ENCODE measurements at regions of chr2 and their contacts with region 1.

Region 1: GRCh38 chr2:223051693-223052289 is at the start of gene KCNE4:
- DNase-seq: peak; percentile 82
- ATAC-seq: peak; percentile 25
- H3K4me3 ChIP-seq: peak within 1 kb of the TSS; percentile 41
- H3K27ac ChIP-seq: peak within 1 kb of the TSS; percentile 68
- H3K4me1 ChIP-seq: peaks cover 27% of the 10 kb centered on the region
- H3K27me3 ChIP-seq: no peaks in the 10 kb centered on the region
- CTCF ChIP-seq: no peak
- POLR2A ChIP-seq: peak; percentile 94
- RAD21 ChIP-seq: no peak
- total RNA-seq, gene KCNE4: 6.6 and 8.3 TPM in 2 replicates

Region 2: GRCh38 chr2:222903234-222904220 is 148.3 kb before region 1 on chr2:
- CTCF ChIA-PET with region 1: no interaction called
- POLR2A ChIA-PET with region 1: no interaction called
- dilution Hi-C with region 1: no loop called
- in situ Hi-C with region 1: no loop called
- intact Hi-C with region 1: no loop called
- DNase-seq: peak; percentile 73
- ATAC-seq: peak; percentile 24; the same call in 1 of the 2 replicates
- H3K4me3 ChIP-seq: no peak overlapping the region
- H3K27ac ChIP-seq: peak overlapping the region; percentile 80; the same call in 1 of the 2 replicates
- H3K4me1 ChIP-seq: peaks cover 36% of the 10 kb centered on the region
- H3K27me3 ChIP-seq: no peaks in the 10 kb centered on the region
- CTCF ChIP-seq: peak; percentile 77
- POLR2A ChIP-seq: no peak
- RAD21 ChIP-seq: peak; percentile 79

Region 3: GRCh38 chr2:222993920-222994650 is 57.7 kb before region 1 on chr2:
- CTCF ChIA-PET with region 1: interaction called, 3 read pairs
- POLR2A ChIA-PET with region 1: no interaction called
- dilution Hi-C with region 1: no loop called
- in situ Hi-C with region 1: no loop called
- intact Hi-C with region 1: loop called (anchors 2 kb)
- DNase-seq: peak; percentile 98
- ATAC-seq: peak; percentile 83
- H3K4me3 ChIP-seq: no peak overlapping the region
- H3K27ac ChIP-seq: peak overlapping the region; percentile 88; the same call in 1 of the 2 replicates
- H3K4me1 ChIP-seq: peaks cover 12% of the 10 kb centered on the region
- H3K27me3 ChIP-seq: no peaks in the 10 kb centered on the region
- CTCF ChIP-seq: 0 out of 2 replicates have a peak, but pooled peaks have one; percentile 1
- POLR2A ChIP-seq: no peak
- RAD21 ChIP-seq: 0 out of 2 replicates have a peak, but pooled peaks have one; percentile 9

Region 4: GRCh38 chr2:223027442-223027841 is 24.3 kb before region 1 on chr2:
- CTCF ChIA-PET with region 1: interaction called, 10 read pairs
- POLR2A ChIA-PET with region 1: interaction called, 6 read pairs
- dilution Hi-C with region 1: no loop called
- in situ Hi-C with region 1: no loop called
- intact Hi-C with region 1: no loop called
- DNase-seq: peak; percentile 81
- ATAC-seq: peak; percentile 54
- H3K4me3 ChIP-seq: no peak overlapping the region
- H3K27ac ChIP-seq: no peak overlapping the region
- H3K4me1 ChIP-seq: peaks cover 5% of the 10 kb centered on the region; the same call in 1 of the 2 replicates
- H3K27me3 ChIP-seq: no peaks in the 10 kb centered on the region
- CTCF ChIP-seq: no peak
- POLR2A ChIP-seq: no peak
- RAD21 ChIP-seq: no peak

Region 5: DNA sequence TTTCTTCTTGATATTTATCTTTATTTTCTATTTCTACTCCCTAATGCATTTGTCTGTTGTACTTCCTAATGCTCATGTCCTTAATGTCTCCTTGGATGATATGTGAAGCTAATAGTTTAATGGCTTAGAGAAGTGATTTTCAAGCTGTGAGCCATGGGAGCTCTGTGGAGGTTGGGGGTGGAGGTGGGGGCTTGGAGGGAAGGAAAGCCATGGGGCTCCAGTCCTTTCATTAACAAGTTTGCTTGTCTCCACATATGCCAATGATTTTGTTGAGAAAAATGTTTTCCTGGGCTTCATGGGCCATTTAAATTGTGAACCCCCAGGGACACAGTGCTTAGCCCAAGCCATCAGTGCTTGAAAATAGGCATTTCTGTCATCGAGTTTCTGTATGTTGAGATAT is 286.2 kb after region 1 on chr2:
- CTCF ChIA-PET with region 1: no interaction called
- POLR2A ChIA-PET with region 1: no interaction called
- dilution Hi-C with region 1: no loop called
- in situ Hi-C with region 1: no loop called
- intact Hi-C with region 1: no loop called
- DNase-seq: no peak
- ATAC-seq: no peak
- H3K4me3 ChIP-seq: no peak overlapping the region
- H3K27ac ChIP-seq: no peak overlapping the region
- H3K4me1 ChIP-seq: no peaks in the 10 kb centered on the region
- H3K27me3 ChIP-seq: no peaks in the 10 kb centered on the region; the same call in 1 of the 2 replicates
- CTCF ChIP-seq: no peak
- POLR2A ChIP-seq: no peak
- RAD21 ChIP-seq: no peak

Region 6: DNA sequence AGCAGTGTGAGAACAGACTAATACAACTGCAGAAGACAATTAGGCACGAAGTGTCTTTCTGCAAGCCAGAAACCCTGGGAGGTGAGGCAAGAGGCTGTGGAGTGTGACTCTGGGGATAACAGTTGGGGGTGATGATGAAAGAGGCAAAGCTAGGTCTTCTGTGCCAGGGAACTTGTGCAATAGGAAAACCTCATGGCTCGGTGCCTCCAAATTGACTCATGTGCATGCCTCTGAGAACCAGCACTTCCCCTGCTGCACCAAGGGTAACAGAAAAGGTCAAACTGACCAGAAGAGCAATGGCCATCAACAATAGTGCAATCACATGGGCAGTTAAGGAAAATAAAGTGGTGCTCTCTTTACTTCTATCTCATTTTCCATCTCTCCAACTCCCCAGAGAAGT is 414.0 kb after region 1 on chr2:
- CTCF ChIA-PET with region 1: no interaction called
- POLR2A ChIA-PET with region 1: no interaction called
- dilution Hi-C with region 1: no loop called
- in situ Hi-C with region 1: no loop called
- intact Hi-C with region 1: loop called (anchors 10 kb)
- DNase-seq: peak; percentile 96
- ATAC-seq: peak; percentile 81
- H3K4me3 ChIP-seq: no peak overlapping the region
- H3K27ac ChIP-seq: no peak overlapping the region
- H3K4me1 ChIP-seq: peaks cover 13% of the 10 kb centered on the region
- H3K27me3 ChIP-seq: no peaks in the 10 kb centered on the region
- CTCF ChIP-seq: no peak
- POLR2A ChIP-seq: no peak
- RAD21 ChIP-seq: peak; percentile 8; the same call in 1 of the 2 replicates

Region 7: GRCh38 chr2:223613017-223613950 is 561.5 kb after region 1 on chr2:
- CTCF ChIA-PET with region 1: no interaction called
- POLR2A ChIA-PET with region 1: no interaction called
- dilution Hi-C with region 1: no loop called
- in situ Hi-C with region 1: no loop called
- intact Hi-C with region 1: loop called (anchors 10 kb)
- DNase-seq: peak; percentile 99
- ATAC-seq: peak; percentile 99
- H3K4me3 ChIP-seq: peak overlapping the region; percentile 25
- H3K27ac ChIP-seq: peak overlapping the region; percentile 18
- H3K4me1 ChIP-seq: peaks cover 3% of the 10 kb centered on the region; the same call in 1 of the 2 replicates
- H3K27me3 ChIP-seq: no peaks in the 10 kb centered on the region
- CTCF ChIP-seq: peak; percentile 24; the same call in 1 of the 2 replicates
- POLR2A ChIP-seq: peak; percentile 52; the same call in 1 of the 2 replicates
- RAD21 ChIP-seq: no peak; the same call in 1 of the 2 replicates